ENCODE measurements at regions of chr12 and their contacts with region 1.

Region 1: GRCh38 chr12:119649202-119649808 is 18.6 kb upstream of the PRKAB1 start:
- DNase-seq: no peak
- H3K4me3 ChIP-seq: no peak overlapping the region
- H3K27ac ChIP-seq: no peak overlapping the region
- H3K4me1 ChIP-seq: no peaks in the 10 kb centered on the region
- H3K27me3 ChIP-seq: no peaks in the 10 kb centered on the region
- CTCF ChIP-seq: peak; percentile 58 to 65
- POLR2A ChIP-seq: no peak

Region 2: GRCh38 chr12:119444456-119445044 is 204.8 kb before region 1 on chr12:
- CTCF ChIA-PET with region 1: interaction called, 61 read pairs
- POLR2A ChIA-PET with region 1: no interaction called
- dilution Hi-C with region 1: no loop called
- intact Hi-C with region 1: loop called (anchors 1 kb)
- DNase-seq: peak; percentile 28
- H3K4me3 ChIP-seq: no peak overlapping the region
- H3K27ac ChIP-seq: no peak overlapping the region
- H3K4me1 ChIP-seq: no peaks in the 10 kb centered on the region
- H3K27me3 ChIP-seq: no peaks in the 10 kb centered on the region
- CTCF ChIP-seq: peak; percentile 60 to 90
- POLR2A ChIP-seq: no peak

Region 3: GRCh38 chr12:119544765-119545625 is 104.3 kb before region 1 on chr12:
- CTCF ChIA-PET with region 1: interaction called, 13 read pairs
- POLR2A ChIA-PET with region 1: no interaction called
- dilution Hi-C with region 1: no loop called
- intact Hi-C with region 1: no loop called
- DNase-seq: peak; percentile 76
- H3K4me3 ChIP-seq: no peak overlapping the region
- H3K27ac ChIP-seq: no peak overlapping the region
- H3K4me1 ChIP-seq: no peaks in the 10 kb centered on the region
- H3K27me3 ChIP-seq: no peaks in the 10 kb centered on the region
- CTCF ChIP-seq: peak; percentile 63 to 76
- POLR2A ChIP-seq: no peak

Region 4: DNA sequence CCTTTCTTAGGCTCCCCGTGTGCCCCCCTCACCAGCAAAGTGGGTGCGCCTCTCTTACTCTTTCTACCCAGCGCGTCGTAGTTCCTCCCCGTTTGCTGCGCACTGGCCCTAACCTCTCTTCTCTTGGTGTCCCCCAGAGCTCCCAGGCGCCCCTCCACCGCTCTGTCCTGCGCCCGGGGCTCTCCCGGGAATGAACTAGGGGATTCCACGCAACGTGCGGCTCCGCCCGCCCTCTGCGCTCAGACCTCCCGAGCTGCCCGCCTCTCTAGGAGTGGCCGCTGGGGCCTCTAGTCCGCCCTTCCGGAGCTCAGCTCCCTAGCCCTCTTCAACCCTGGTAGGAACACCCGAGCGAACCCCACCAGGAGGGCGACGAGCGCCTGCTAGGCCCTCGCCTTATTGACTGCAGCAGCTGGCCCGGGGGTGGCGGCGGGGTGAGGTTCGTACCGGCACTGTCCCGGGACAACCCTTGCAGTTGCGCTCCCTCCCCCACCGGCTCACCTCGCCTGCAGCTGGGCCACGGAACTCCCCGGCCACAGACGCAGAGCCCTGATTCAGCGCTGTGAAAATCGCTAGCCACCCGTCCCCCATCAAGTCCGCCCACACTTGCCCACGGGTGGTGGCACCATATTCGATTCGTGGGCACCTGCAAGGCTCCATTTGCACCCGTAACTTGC is 54.4 kb before region 1 on chr12:
- CTCF ChIA-PET with region 1: interaction called, 13 read pairs
- POLR2A ChIA-PET with region 1: no interaction called
- dilution Hi-C with region 1: no loop called
- intact Hi-C with region 1: no loop called
- DNase-seq: no peak
- H3K4me3 ChIP-seq: peak overlapping the region in 1 of 3 experiments; percentile 15
- H3K27ac ChIP-seq: no peak overlapping the region
- H3K4me1 ChIP-seq: peaks cover 25% of the 10 kb centered on the region
- H3K27me3 ChIP-seq: peaks cover 20 to 22% of the 10 kb centered on the region in 2 experiments
- CTCF ChIP-seq: no peak
- POLR2A ChIP-seq: no peak

Region 5: DNA sequence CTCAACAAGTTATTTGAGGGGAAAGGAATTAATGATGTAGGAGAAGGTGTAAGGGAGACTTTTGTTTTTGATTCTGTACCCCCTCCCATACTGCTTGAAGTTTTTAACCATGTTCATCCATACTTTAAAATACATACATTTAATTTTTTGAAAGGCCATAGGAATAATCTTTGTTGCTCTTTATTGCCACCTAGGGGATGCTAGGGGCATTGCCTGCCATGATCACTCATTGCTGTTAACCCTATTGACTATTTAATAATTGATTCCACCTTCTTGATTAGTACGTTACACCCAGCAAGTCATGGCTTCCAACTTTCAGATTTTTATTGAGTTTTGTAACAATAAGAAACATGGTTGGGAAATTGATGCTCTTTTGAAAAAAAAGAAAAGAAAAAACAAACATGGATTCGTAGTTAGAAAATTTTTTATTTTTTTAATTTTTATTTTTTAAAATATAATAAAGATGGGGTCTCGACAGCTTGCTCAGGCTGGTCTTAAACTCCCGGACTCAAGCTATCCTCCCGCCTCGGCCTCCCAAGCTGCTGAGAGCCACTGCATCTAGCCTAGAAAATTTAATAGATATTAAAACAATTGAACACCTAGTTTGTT is 10.1 kb after region 1 on chr12:
- CTCF ChIA-PET with region 1: interaction called, 10 read pairs
- POLR2A ChIA-PET with region 1: no interaction called
- dilution Hi-C with region 1: no loop called
- intact Hi-C with region 1: no loop called
- DNase-seq: peak; percentile 42
- H3K4me3 ChIP-seq: no peak overlapping the region
- H3K27ac ChIP-seq: no peak overlapping the region
- H3K4me1 ChIP-seq: no peaks in the 10 kb centered on the region
- H3K27me3 ChIP-seq: peaks cover 3 to 6% of the 10 kb centered on the region in 2 experiments
- CTCF ChIP-seq: peak; percentile 62 to 70
- POLR2A ChIP-seq: no peak

Region 6: GRCh38 chr12:119749666-119750065 is 100.4 kb after region 1 on chr12:
- CTCF ChIA-PET with region 1: no interaction called
- POLR2A ChIA-PET with region 1: no interaction called
- dilution Hi-C with region 1: no loop called
- intact Hi-C with region 1: no loop called
- DNase-seq: no peak
- H3K4me3 ChIP-seq: no peak overlapping the region
- H3K27ac ChIP-seq: no peak overlapping the region
- H3K4me1 ChIP-seq: no peaks in the 10 kb centered on the region
- H3K27me3 ChIP-seq: no peaks in the 10 kb centered on the region
- CTCF ChIP-seq: no peak
- POLR2A ChIP-seq: no peak